OCI-LY7 (cell line): ENCODE measurements at regions of chr17 and their contacts with region 1.

Region 1: DNA sequence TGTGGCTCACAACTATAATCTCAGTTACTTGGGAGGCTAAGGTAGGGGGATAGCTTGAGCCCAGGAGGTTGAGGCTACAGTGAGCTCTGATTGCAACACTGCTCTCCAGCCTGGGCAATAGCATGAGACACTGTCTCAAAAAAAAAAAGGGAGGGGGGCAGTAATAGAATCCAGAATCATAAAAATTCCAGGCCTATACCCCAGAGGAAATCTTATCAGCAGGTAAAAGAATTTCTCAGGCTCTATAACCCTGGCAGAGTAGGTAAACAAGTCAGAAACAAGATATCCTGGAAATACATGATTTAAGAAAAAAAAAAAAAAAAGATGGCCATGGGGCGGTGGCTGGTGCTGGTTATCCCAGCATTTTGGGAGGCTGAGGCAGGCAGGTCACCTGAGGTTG is 12.9 kb downstream of the SPAG9 start:
- DNase-seq: no peak
- H3K4me3 ChIP-seq: no peak overlapping the region
- H3K27ac ChIP-seq: no peak overlapping the region
- H3K4me1 ChIP-seq: peaks cover 4% of the 10 kb centered on the region
- CTCF ChIP-seq: no peak

Region 2: DNA sequence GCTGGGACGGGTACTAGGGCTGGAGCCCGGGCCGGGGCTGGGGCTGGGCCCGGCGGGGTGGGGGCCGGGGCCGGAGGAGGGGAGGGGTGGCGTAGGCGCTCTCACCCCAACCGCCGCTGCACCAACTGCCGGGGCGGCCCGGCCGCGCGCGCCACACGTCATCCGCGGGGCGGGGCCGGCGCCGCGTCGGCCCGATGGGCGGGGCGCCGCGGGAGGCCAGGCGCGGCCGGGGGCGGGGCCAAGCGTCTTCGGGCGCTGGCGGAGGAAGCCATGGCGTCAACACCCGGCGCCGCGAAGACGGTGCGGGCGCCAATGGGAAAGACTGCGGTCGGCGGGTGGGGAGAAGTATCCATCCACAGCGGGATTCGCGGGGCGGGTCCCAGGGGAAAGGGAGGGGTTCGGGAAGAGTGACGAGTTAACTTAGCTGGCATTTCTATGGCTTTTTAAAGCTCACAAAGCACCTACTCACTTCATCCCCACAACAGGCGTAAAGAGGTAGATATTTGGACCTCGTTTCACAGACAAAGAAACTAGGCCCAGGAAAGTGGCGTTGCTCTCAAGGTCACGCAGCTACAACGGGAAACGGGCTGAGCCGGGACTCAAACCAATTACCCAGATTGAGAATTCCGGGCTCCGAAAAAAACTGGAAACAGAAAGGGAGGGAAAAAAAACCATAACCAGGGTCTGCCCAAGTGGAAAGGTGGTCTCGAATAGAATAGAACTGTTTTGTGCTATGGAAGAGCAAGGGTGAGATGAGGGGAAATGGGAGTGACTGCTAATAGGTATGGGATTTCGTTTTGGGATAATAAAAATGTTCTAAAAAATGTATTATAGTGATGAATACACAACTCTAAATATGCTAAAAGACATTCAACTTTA is 13.2 kb after region 1 on chr17 and contains the start of gene SPAG9:
- CTCF ChIA-PET with region 1: no interaction called
- POLR2A ChIA-PET with region 1: interaction called, 10 read pairs
- intact Hi-C with region 1: no loop called
- DNase-seq: peak; percentile 95
- H3K4me3 ChIP-seq: peak within 1 kb of the TSS; percentile 100
- H3K27ac ChIP-seq: peak within 1 kb of the TSS; percentile 87
- H3K4me1 ChIP-seq: peaks cover 38% of the 10 kb centered on the region
- CTCF ChIP-seq: no peak
- total RNA-seq, gene SPAG9: 61.1 and 78.9 TPM in 2 replicates